Right lobe of liver (tissue), 6 donors: ENCODE measurements at regions of chr2 and their contacts with region 1.

Region 1: DNA sequence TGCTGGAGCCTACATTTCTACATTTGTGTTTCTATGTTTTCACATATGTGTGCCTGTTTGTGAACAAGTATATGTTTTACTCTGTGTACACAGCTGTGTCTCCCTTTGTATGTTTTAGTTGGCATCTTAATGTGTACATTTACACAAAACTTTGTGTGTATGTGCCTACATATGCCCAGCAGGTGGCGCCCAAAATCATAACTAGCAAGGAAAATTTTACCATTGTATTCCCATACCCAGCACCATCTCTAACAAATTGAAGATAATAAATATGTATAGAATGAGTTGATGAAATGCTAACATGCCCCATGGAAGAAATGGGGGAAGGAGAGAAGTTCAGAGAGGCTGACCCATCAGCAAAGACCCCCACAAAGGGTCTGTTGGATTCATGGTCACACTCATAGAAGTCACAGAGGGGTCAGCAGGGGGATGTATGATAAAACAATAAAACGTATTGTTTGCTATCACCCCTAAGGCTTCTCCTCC is 48.1 kb downstream of the PKDCC start:
- DNase-seq: peak; percentile 70 to 77 (median 72)
- ATAC-seq: peak; percentile 56 to 71 (median 63)
- H3K4me3 ChIP-seq: no peak overlapping the region
- H3K27ac ChIP-seq: no peak overlapping the region
- H3K4me1 ChIP-seq: peaks cover 0 to 20% (median 8%) of the 10 kb centered on the region in 4 donors
- H3K27me3 ChIP-seq: no peaks in the 10 kb centered on the region
- CTCF ChIP-seq: peak; percentile 77 to 95 (median 80)
- POLR2A ChIP-seq: no peak

Region 2: DNA sequence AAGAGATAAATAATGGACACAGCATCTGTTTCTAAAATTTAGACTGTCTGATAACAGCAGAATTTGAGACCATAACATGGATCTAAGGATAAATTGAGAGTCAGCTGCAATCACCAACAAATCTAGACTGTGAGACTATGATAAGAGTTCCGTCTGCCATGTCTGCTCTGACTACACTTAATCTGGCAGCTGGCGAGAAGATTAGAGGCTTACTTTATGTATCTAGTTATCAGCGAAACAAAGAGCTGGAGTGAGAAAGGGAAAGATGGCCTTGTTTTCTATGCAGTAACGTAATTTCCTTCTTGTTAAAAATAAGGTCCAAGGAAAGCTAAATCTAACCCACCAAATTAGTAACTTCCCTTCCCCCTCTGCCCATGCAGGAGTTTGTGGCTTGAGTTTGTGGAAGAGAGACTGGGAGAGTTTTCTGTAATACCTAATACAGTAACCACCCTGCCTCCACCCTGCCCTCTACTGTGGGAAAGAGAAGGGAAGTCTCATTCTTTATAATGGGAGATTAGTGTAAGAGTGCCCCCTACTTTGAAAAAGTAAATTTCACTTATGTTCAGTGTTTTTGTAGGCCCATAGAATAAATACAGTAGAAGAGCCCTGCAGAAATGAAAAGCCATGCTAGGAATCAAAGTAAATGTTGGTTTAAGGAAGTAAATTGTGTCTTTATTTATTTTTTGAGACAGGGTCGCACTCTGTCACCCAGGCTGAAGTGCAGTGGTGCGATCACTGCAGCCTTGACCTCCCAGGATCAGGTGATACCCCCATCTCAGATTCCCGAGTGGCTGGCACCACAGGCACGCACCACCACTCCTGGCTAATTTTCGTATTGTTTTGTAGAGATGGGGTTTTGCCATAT is 100.7 kb after region 1 on chr2:
- intact Hi-C with region 1: loop called in 1 of 2 experiments (anchors 10 kb)
- DNase-seq: peak in 2 of 3 donors; percentile 43 to 72
- ATAC-seq: peak; percentile 84 to 93 (median 87)
- H3K4me3 ChIP-seq: no peak overlapping the region
- H3K27ac ChIP-seq: peak overlapping the region; percentile 37 to 82 (median 51)
- H3K4me1 ChIP-seq: peaks cover 0 to 50% (median 17%) of the 10 kb centered on the region in 4 donors
- H3K27me3 ChIP-seq: no peaks in the 10 kb centered on the region
- CTCF ChIP-seq: peak; percentile 64 to 89 (median 74)
- POLR2A ChIP-seq: no peak

Region 3: DNA sequence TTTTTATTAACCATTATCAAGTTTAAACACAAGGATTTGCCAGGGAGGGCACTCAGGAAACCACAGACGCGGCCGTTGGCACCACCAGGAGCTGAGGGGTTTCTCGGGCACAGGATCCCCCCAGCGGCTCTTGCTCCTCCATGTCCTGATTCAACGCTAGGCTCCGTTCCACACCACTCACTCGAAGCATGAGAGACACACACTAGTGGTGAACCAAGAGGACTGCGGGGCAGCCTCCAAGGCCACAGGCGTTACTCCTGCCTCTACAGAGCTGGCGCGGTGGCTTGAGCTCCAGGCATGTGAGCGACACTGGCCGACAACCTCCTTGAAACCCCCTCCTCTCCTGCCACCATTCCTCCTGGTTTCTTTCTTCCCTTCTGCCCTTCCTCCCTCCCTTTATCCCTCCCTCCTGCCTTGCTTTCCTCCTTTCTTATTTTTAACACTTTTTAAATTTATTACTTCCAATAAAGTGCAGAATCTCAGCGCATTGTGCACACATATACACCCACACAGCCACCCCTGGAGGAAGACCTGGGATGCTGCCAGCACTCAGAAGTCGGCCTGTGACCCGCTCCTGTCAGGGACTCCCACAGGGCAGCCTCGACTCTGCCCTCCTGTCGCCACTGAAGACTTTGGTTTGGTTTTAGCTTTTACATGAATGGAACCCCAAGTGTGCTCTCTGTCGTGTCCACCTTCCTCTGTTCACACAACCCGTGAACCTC is 243.4 kb after region 1 on chr2:
- intact Hi-C with region 1: loop called in 1 of 2 experiments (anchors 10 kb)
- DNase-seq: peak in 1 of 3 donors; percentile 37
- ATAC-seq: no peak
- H3K4me3 ChIP-seq: no peak overlapping the region
- H3K27ac ChIP-seq: no peak overlapping the region
- H3K4me1 ChIP-seq: peaks cover 0 to 15% (median 2%) of the 10 kb centered on the region in 4 donors
- H3K27me3 ChIP-seq: no peaks in the 10 kb centered on the region
- CTCF ChIP-seq: no peak
- POLR2A ChIP-seq: no peak

Region 4: DNA sequence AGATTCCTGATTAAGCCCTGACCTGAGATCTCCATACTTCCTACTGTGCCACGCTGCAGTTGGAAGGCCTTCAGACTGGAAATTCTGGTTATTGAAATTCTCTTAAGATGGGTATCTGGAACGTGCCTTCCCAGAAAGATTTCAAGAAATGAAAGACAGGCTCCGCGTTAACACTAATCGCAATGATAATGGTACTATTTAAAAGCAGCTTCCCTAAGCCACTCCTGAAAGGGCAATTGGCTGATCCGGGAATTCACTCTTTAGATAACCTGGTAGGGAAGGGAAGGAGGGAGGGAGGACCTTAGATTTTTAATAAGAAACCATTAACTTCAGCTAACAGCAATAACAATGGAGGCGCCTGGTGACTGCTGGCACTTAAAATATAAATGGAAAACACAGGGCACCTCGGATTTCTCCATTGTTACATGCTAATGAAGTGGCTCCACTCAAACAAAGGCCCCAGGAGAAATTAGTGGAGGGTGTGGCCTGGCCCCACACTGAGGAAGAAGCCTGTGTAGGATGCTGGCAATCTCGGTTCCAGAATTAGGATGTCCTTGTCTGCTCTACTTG is 449.9 kb after region 1 on chr2:
- intact Hi-C with region 1: no loop called
- DNase-seq: no peak
- ATAC-seq: no peak
- H3K4me3 ChIP-seq: no peak overlapping the region
- H3K27ac ChIP-seq: no peak overlapping the region
- H3K4me1 ChIP-seq: no peaks in the 10 kb centered on the region
- H3K27me3 ChIP-seq: no peaks in the 10 kb centered on the region
- CTCF ChIP-seq: no peak
- POLR2A ChIP-seq: no peak